HEK293T (cell line): ENCODE measurements at regions of chr6 and their contacts with region 1.

Region 1: DNA sequence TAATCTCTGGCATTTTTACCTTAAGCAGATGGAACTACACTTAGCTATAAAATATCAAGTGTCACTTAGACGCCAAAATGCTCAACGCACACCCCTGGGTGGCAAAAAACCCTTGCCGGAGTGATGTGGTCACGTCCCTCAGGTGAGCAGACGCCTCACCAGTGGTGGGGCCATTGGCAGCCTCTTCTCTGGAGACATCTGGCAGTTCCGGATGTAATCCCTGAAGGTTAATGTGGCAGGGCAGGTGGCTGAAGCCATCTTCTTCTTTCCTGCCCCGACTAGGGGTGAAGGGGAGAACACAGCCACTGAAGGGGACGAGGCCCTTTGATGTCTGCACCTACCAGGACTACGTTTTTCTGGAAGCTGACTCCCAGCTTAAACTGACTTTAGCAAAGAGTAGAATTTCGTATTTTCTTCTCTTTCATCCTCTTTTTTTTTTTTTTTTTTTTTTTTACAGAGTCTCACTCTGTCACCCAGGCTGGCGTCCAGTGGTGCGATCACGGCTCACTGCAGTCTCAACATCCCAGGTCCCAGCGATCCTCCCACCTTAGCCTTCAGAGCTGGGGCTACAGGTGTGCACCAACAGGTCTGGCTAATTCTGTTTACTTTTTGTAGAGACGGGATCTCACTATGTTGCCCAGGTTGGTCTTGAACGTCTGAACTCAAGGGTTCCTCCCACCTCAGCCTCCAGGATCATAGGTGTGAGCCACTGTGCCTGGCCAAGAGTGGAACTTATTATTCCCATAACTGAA is 152.1 kb downstream of the TTLL2 start:
- DNase-seq: no peak

Region 2: GRCh38 chr6:167210375-167211294 is 266.4 kb before region 1 on chr6:
- CTCF ChIA-PET with region 1: interaction called, 12 read pairs
- POLR2A ChIA-PET with region 1: no interaction called
- DNase-seq: no peak

Region 3: DNA sequence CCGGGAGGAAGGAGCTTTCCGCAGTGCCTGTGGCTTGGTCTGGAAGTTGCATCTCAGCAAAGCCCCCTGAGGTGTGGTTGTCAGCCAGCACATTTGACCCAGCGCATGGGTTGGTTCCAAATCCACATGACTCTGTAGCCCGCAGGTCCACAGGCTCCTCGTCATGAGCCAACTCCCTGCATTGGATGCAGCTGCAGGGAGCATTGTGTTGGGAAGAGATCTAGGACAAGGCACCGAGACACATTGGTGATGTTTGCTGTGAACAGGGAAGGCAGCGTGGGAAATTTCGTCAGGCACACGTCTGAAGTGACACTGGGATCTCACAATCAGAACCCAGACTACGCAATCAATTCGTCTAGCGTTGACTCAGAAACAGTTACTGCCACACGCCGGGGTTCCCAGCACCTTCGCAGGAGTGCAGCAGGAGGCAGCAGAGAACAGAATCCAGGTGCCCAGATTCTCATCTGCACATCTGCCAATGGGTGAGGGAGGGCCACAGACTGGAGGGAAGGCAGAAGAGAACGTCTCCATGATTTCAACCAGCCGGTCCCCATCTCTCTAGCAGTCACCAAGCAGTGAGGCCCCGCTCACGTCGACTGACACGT is 24.9 kb after region 1 on chr6:
- CTCF ChIA-PET with region 1: no interaction called
- POLR2A ChIA-PET with region 1: no interaction called
- DNase-seq: peak; percentile 41

Region 4: DNA sequence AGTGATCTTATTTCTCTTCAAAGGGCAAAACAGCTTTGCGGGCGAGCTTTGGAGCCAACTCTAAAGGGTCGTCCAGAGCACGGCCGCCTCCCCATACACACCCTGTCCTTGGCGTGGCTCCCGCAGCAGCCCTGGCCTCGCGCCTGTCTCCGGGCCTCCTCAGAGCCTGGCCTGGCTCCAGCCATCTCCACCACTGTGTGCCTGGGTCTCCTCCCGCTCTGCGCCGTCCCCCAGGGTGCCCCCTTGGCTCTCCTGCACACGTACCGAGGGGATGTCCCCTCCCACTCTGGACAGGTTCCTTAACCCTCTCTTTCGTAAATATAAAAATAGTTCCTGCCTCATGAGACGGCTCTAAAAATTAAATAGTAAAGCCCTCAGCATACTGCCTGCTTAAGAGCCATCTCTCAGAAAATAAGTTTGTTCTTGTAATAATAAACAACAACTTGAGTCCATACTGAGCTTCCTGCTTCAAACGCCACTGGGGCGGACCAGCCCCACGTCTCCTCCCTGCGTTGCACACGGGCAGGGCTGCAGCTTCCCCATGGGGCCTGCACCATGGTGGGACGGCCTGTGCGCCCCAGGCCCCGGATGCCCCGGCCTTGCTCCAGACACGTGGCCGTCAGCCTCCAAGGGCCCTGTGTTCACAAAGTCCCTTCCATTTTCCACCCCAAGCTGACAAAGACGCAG is 74.1 kb after region 1 on chr6:
- CTCF ChIA-PET with region 1: no interaction called
- POLR2A ChIA-PET with region 1: no interaction called
- DNase-seq: no peak